ENCODE measurements at regions of chr13 and their contacts with region 1.

Region 1: DNA sequence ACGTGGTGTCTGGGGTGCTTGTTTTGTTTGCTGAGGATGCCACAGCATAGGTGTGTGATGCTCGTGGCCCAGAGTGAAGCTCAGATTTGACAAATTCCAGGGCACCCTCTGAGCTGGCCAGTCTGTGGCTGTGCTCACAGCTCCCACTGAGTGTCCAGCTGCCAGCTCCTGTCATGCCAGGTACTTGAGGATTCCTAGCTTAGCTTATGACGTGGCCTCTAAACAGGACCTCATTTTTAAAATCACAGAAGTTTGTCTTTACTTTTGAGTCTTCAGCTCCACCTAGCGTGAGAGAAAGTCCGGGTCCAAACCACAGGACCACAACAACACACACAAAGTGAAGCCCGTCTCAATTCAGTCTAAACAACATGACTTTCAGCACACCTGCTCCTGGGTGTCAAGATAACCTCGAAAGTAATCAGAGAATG is 117.3 kb downstream of the RAB20 start:
- DNase-seq: no peak
- H3K4me3 ChIP-seq: no peak overlapping the region
- H3K4me3 Mint-ChIP-seq: no peak overlapping the region
- H3K27ac Mint-ChIP-seq: peak overlapping the region; percentile 17
- H3K4me1 ChIP-seq: peaks cover 67% of the 10 kb centered on the region
- H3K4me1 Mint-ChIP-seq: peaks cover 35% of the 10 kb centered on the region
- H3K27me3 ChIP-seq: no peaks in the 10 kb centered on the region
- H3K27me3 Mint-ChIP-seq: no peaks in the 10 kb centered on the region
- CTCF ChIP-seq: peak; percentile 16 to 18

Region 2: GRCh38 chr13:110138010-110138699 is 306.1 kb before region 1 on chr13:
- CTCF ChIA-PET with region 1: no interaction called
- POLR2A ChIA-PET with region 1: no interaction called
- intact Hi-C with region 1: loop called (anchors 5 kb)
- DNase-seq: peak; percentile 86
- H3K4me3 ChIP-seq: peak overlapping the region; percentile 61
- H3K4me3 Mint-ChIP-seq: peak overlapping the region; percentile 92
- H3K27ac Mint-ChIP-seq: peak overlapping the region; percentile 82
- H3K4me1 ChIP-seq: peaks cover 5% of the 10 kb centered on the region
- H3K4me1 Mint-ChIP-seq: no peaks in the 10 kb centered on the region
- H3K27me3 ChIP-seq: no peaks in the 10 kb centered on the region
- H3K27me3 Mint-ChIP-seq: peaks cover 3% of the 10 kb centered on the region
- CTCF ChIP-seq: peak in 1 of 2 experiments; percentile 32

Region 3: GRCh38 chr13:110312339-110313031 is 131.8 kb before region 1 on chr13:
- CTCF ChIA-PET with region 1: no interaction called
- POLR2A ChIA-PET with region 1: no interaction called
- intact Hi-C with region 1: loop called (anchors 1 kb)
- DNase-seq: peak; percentile 91 to 95
- H3K4me3 ChIP-seq: no peak overlapping the region
- H3K4me3 Mint-ChIP-seq: peak overlapping the region; percentile 3
- H3K27ac Mint-ChIP-seq: peak overlapping the region; percentile 76
- H3K4me1 ChIP-seq: peaks cover 64% of the 10 kb centered on the region
- H3K4me1 Mint-ChIP-seq: peaks cover 34% of the 10 kb centered on the region
- H3K27me3 ChIP-seq: no peaks in the 10 kb centered on the region
- H3K27me3 Mint-ChIP-seq: no peaks in the 10 kb centered on the region
- CTCF ChIP-seq: peak in 1 of 2 experiments; percentile 5

Region 4: GRCh38 chr13:110509971-110510786 is 65.9 kb after region 1 on chr13:
- CTCF ChIA-PET with region 1: no interaction called
- POLR2A ChIA-PET with region 1: no interaction called
- intact Hi-C with region 1: loop called (anchors 2 kb)
- DNase-seq: peak in 1 of 2 experiments; percentile 37
- H3K4me3 ChIP-seq: no peak overlapping the region
- H3K4me3 Mint-ChIP-seq: no peak overlapping the region
- H3K27ac Mint-ChIP-seq: peak overlapping the region; percentile 69
- H3K4me1 ChIP-seq: peaks cover 53% of the 10 kb centered on the region
- H3K4me1 Mint-ChIP-seq: peaks cover 43% of the 10 kb centered on the region
- H3K27me3 ChIP-seq: no peaks in the 10 kb centered on the region
- H3K27me3 Mint-ChIP-seq: no peaks in the 10 kb centered on the region
- CTCF ChIP-seq: no peak

Region 5: DNA sequence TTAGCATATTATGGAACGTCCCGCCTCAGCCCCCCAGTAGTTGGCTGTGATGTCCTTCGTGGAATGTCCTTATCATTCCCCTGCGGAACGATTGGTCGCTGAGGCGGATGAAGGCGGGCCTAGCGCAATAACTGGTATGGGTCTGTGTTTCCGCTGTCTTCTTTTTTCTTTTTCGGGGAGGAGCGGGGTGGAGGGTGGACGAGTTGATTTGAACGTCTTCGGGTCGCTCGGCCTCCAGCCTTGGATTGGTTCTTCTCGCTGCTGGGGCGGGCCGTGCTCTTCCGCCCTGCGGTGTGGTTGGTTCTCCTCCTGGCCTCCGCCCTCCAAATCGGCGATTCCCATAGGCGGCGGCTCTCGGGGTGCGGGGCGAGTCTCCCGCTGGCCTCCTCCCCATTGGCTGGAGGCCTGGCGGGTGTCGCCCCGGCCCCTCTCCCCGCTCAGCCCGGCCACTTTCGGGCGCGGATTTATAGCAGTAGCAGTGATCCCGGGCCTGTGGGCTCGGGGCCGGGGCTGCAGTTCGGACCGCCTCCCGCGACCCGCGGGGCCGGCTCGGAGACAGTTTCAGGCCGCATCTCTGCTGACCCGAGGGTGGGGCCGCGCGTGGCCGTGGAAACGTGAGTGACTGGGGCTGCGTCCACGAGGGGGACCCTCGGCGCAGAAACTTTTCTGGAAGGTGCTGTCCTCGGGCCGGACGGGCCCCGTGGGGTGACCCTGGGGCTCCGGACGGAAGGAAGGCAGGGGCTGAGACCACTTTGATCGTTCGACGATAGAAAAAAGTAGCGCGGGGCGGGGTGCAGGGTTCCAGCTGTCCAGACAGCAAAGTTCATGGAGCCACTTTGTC is 271.4 kb after region 1 on chr13:
- CTCF ChIA-PET with region 1: interaction called, 5 read pairs
- POLR2A ChIA-PET with region 1: no interaction called
- intact Hi-C with region 1: loop called (anchors 2 kb)
- DNase-seq: peak; percentile 98 to 100
- H3K4me3 ChIP-seq: peak overlapping the region; percentile 93
- H3K4me3 Mint-ChIP-seq: peak overlapping the region; percentile 100
- H3K27ac Mint-ChIP-seq: peak overlapping the region; percentile 96
- H3K4me1 ChIP-seq: peaks cover 16% of the 10 kb centered on the region; the same call in 1 of the 2 replicates
- H3K4me1 Mint-ChIP-seq: peaks cover 17% of the 10 kb centered on the region
- H3K27me3 ChIP-seq: no peaks in the 10 kb centered on the region
- H3K27me3 Mint-ChIP-seq: peaks cover 2% of the 10 kb centered on the region
- CTCF ChIP-seq: peak in 1 of 2 experiments; percentile 18

Measured in Caco-2 (cell line).